Sigmoid colon (tissue), 7 donors: ENCODE measurements at regions of chr2 and their contacts with region 1.

Region 1: GRCh38 chr2:220293969-220294368 is 666.5 kb downstream of the SLC4A3 start:
- DNase-seq: no peak
- H3K4me3 ChIP-seq: no peak overlapping the region
- H3K27ac ChIP-seq: no peak overlapping the region
- H3K4me1 ChIP-seq: no peaks in the 10 kb centered on the region
- H3K27me3 ChIP-seq: no peaks in the 10 kb centered on the region
- CTCF ChIP-seq: no peak
- EP300 ChIP-seq: no peak
- POLR2A ChIP-seq: no peak

Region 2: DNA sequence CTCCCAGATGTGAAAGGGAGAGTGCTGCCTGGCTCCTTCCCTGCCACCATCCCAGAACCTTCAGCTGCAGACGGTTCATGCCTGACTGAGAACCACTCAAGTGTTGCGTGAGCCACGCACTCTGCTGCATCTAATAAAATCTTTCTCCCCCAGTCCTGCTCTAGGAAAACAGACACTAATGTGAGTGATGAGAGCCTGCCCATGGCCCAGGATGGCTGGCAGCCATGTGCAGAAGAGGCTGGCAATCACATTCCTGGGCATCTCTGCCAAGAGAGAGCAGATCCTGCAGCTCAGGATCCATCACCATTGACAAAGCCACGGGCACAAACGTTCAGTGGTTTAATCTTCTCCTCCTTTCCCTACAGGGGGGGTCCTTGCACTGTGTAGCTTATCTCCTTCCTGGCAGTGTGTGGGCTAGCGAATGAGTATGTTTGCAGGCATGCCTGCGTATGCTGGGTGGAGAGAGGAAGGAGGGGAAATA is 189.1 kb before region 1 on chr2:
- intact Hi-C with region 1: no loop called
- DNase-seq: no peak
- H3K4me3 ChIP-seq: no peak overlapping the region
- H3K27ac ChIP-seq: no peak overlapping the region
- H3K4me1 ChIP-seq: peaks cover 0 to 5% (median 0%) of the 10 kb centered on the region in 4 donors
- H3K27me3 ChIP-seq: no peaks in the 10 kb centered on the region
- CTCF ChIP-seq: no peak
- EP300 ChIP-seq: no peak
- POLR2A ChIP-seq: no peak

Region 3: DNA sequence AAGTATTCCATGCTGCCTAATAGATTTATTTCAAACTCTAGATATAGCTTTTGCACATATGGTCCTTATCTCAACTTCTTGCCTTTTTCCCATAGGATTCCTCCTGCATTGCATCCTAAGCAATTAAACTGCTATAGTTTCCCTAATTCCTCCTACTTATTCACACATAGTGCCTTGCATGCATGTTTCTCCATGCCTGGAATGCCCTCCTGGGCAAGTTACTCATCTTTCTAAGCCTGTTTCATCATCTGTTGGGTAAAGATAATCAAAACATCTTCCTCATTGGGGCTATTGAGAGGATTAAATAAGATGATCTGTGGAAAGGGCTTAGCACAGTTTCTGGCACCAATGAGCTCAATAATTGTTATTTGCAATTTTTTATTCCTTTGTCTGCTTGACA is 59.9 kb after region 1 on chr2:
- intact Hi-C with region 1: loop called (anchors 2 kb)
- DNase-seq: no peak
- H3K4me3 ChIP-seq: no peak overlapping the region
- H3K27ac ChIP-seq: no peak overlapping the region
- H3K4me1 ChIP-seq: no peaks in the 10 kb centered on the region
- H3K27me3 ChIP-seq: no peaks in the 10 kb centered on the region
- CTCF ChIP-seq: no peak
- EP300 ChIP-seq: no peak
- POLR2A ChIP-seq: no peak

Region 4: DNA sequence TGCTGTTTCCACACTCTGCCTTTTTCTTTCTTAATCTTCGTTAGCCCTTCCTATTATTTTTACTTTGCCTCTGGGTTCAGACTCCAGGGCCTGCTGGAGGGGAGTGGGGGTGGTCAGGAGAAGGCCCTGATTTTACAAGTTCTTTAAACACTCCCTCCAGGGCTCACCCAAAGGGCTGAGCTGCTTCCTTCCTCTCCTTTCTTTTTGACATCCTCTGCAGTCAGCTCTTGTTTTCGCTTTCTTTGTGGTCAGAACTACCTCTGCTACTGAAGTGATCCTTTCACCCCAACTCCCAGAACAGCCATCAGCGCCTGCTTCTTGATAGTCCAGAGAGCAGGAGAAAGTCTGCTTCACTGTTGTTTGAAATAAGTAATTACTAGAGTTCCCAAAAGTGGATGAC is 352.5 kb after region 1 on chr2:
- intact Hi-C with region 1: no loop called
- DNase-seq: no peak
- H3K4me3 ChIP-seq: no peak overlapping the region
- H3K27ac ChIP-seq: no peak overlapping the region
- H3K4me1 ChIP-seq: no peaks in the 10 kb centered on the region
- H3K27me3 ChIP-seq: no peaks in the 10 kb centered on the region
- CTCF ChIP-seq: no peak
- EP300 ChIP-seq: no peak
- POLR2A ChIP-seq: no peak